ENCODE measurements at regions of chr16 and their contacts with region 1.

Region 1: DNA sequence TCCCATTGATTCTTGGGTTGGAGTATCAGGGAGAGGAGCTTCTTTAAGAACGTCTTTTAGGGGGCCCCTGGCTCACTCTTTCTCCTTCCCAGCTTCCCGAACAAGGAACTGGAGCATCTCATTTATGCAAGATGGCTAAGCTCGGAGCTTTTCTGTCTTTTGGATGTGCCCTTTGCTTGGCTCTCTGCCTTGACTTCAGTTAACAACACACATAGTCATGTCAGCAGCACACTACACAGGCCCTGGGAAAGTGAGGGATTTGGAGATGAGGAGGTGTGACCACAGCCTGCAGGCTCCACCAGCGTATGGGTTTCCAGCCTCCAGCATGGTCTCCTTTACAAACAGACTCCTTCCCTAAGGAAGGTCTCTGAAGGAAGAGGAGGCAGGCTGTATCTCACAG is 310.4 kb downstream of the SNX29 start:
- DNase-seq: no peak
- H3K4me3 ChIP-seq: no peak overlapping the region
- H3K27ac ChIP-seq: no peak overlapping the region
- H3K4me1 ChIP-seq: no peaks in the 10 kb centered on the region
- H3K27me3 ChIP-seq: no peaks in the 10 kb centered on the region
- CTCF ChIP-seq: no peak

Region 2: GRCh38 chr16:11557801-11558200 is 729.2 kb before region 1 on chr16:
- CTCF ChIA-PET with region 1: no interaction called
- POLR2A ChIA-PET with region 1: interaction called, 10 read pairs
- intact Hi-C with region 1: no loop called
- DNase-seq: no peak
- H3K4me3 ChIP-seq: no peak overlapping the region
- H3K27ac ChIP-seq: no peak overlapping the region
- H3K4me1 ChIP-seq: no peaks in the 10 kb centered on the region
- H3K27me3 ChIP-seq: no peaks in the 10 kb centered on the region
- CTCF ChIP-seq: no peak

Measured in A673 (cell line).